ENCODE measurements at regions of chr19 and their contacts with region 1.

Region 1: GRCh38 chr19:47210689-47211316 is 20.2 kb downstream of the BBC3 start:
- DNase-seq: peak; percentile 74
- H3K4me3 ChIP-seq: no peak overlapping the region
- H3K27ac ChIP-seq: peak overlapping the region; percentile 29 to 76; a peak in 3 of 4 replicates
- H3K4me1 ChIP-seq: peaks cover 3 to 8% of the 10 kb centered on the region in 2 experiments; a peak in 1 of 4 replicates
- H3K27me3 ChIP-seq: no peaks in the 10 kb centered on the region
- CTCF ChIP-seq: peak; percentile 85
- EP300 ChIP-seq: no peak
- RAD21 ChIP-seq: peak; percentile 83

Region 2: GRCh38 chr19:46886546-46887239 is 324.1 kb before region 1 on chr19:
- CTCF ChIA-PET with region 1: no interaction called
- POLR2A ChIA-PET with region 1: no interaction called
- DNase-seq: no peak
- H3K4me3 ChIP-seq: no peak overlapping the region
- H3K27ac ChIP-seq: peak overlapping the region in 1 of 2 experiments; percentile 63; a peak in 2 of 4 replicates
- H3K4me1 ChIP-seq: peaks cover 4 to 14% of the 10 kb centered on the region in 2 experiments; a peak in 3 of 4 replicates
- H3K27me3 ChIP-seq: no peaks in the 10 kb centered on the region
- CTCF ChIP-seq: no peak
- EP300 ChIP-seq: no peak
- RAD21 ChIP-seq: no peak

Region 3: DNA sequence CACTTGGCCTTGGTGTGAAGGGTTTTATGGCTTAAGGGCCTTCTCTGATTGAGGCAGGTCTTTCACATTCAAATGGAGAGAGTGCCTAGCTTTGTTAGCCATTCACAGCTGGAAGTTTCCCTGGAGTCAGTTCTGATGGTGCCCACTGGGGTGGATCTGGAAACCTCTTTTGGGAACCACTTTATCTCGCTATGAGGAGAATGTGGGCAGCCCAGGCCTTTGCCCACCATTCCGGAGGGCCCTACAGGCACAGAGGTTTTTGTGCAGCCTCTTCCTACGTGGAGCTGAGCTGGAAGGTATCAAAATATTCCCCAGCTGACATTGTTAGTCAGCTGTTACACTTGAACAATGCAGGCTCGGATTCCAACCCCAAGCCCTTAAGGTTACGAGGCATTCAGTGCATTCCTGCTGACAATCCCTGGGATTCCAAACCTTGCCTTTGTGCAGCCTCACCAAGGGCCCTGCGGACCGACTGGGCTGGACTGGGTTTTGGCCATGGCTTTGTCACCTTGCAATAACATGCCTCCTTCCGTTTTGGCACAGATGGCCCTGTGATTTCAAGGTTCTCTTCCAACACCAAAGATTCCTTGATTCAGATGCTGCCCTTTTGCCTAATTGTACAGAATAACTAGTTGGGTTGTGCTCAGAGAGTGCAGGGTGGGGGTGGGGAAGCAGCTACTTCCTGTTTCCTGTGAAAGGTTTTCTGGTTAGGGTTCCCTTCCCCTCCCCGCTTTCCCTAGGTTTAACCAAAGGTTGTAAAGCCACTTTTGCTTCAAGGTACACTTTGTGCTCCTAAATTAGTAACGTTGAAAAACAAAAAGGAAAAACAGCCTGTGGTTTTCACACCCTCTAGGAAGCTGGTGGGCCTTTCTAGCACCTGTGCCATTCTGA is 53.1 kb before region 1 on chr19:
- CTCF ChIA-PET with region 1: interaction called, 14 read pairs
- POLR2A ChIA-PET with region 1: no interaction called
- DNase-seq: no peak
- H3K4me3 ChIP-seq: no peak overlapping the region
- H3K27ac ChIP-seq: peak overlapping the region; percentile 51 to 52; a peak in 3 of 4 replicates
- H3K4me1 ChIP-seq: peaks cover 11 to 19% of the 10 kb centered on the region in 2 experiments
- H3K27me3 ChIP-seq: no peaks in the 10 kb centered on the region
- CTCF ChIP-seq: no peak
- EP300 ChIP-seq: no peak
- RAD21 ChIP-seq: no peak

Region 4: DNA sequence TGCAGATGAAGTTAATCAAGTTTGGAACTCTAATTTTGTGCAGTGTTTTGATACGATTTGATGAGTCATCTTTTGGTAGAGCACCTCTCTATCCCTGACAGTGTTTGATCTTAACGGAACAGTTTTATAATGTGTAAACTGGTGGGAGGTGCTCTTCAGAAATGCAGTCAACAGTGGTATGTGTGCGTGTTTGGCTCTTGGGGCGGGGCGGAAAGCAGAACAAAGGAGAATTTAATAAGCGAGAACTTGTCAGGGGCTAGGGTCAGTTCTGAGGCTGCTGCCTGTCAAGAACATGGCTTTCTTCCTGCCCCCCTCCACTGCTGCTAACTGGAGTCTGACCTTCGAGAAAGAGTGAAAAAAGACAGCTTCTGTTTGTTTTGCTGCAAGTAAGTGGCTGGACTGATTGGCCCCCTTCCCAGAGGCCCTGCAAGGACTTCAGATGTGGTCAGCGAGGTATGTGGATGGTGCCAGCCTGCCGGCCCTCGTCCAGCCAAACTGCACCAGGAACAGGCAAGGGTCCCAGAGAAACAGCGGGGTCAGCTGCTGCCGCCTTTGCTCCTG is 20.6 kb before region 1 on chr19:
- CTCF ChIA-PET with region 1: interaction called, 41 read pairs
- POLR2A ChIA-PET with region 1: no interaction called
- DNase-seq: peak; percentile 46
- H3K4me3 ChIP-seq: peak overlapping the region in 1 of 2 experiments; percentile 16; a peak in 1 of 4 replicates
- H3K27ac ChIP-seq: peak overlapping the region; percentile 60 to 73
- H3K4me1 ChIP-seq: peaks cover 17 to 47% of the 10 kb centered on the region in 2 experiments; a peak in 3 of 4 replicates
- H3K27me3 ChIP-seq: no peaks in the 10 kb centered on the region
- CTCF ChIP-seq: no peak
- EP300 ChIP-seq: peak in 1 of 2 experiments; percentile 63; a peak in 1 of 4 replicates
- RAD21 ChIP-seq: no peak

Region 5: DNA sequence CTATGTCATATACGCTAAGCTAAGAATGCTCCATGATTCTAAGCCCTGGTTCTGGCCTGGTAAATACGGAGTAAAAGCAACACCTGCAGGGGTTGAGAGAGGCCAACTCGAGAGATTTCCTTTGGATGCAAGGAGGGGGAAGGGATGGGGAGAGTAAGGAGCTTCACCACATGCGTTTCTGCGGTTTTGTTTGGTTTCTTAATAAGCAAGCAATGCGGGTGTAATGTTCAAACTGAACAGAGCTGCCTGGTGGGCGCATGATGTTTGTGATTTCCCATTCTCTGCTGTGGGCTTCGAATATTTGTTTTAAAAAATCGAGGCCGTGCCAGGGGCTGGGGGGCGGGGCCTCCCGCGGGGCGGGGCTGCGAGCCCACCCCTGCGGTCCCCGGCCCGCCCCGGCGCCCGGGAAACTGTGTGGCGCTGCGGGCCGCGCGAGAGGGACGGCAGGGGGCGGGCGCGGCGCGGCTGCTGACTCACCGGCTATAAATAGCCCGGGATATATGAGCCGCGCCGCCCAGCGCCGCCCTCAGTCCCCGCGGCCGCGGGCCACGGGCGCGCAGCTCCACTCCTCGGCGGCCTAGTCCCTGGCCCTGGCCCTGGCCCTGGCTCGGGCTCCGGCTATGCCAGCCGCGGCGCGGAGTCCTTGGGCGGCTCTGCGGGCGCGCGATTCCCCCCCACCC is 15.1 kb after region 1 on chr19:
- CTCF ChIA-PET with region 1: interaction called, 69 read pairs
- POLR2A ChIA-PET with region 1: interaction called, 5 read pairs
- DNase-seq: peak; percentile 99
- H3K4me3 ChIP-seq: peak overlapping the region; percentile 49 to 93; a peak in 3 of 4 replicates
- H3K27ac ChIP-seq: peak overlapping the region; percentile 90 to 92
- H3K4me1 ChIP-seq: peaks cover 20 to 26% of the 10 kb centered on the region in 2 experiments; a peak in 3 of 4 replicates
- H3K27me3 ChIP-seq: no peaks in the 10 kb centered on the region
- CTCF ChIP-seq: peak; percentile 14; the same call in 1 of the 2 replicates
- EP300 ChIP-seq: peak in 1 of 2 experiments; percentile 35; a peak in 1 of 4 replicates
- RAD21 ChIP-seq: no peak

Region 6: GRCh38 chr19:47305309-47305751 is 94.5 kb after region 1 on chr19:
- CTCF ChIA-PET with region 1: no interaction called
- POLR2A ChIA-PET with region 1: no interaction called
- DNase-seq: peak; percentile 81
- H3K4me3 ChIP-seq: peak overlapping the region in 1 of 2 experiments; percentile 42; a peak in 1 of 4 replicates
- H3K27ac ChIP-seq: no peak overlapping the region
- H3K4me1 ChIP-seq: no peaks in the 10 kb centered on the region; a peak in 1 of 4 replicates
- H3K27me3 ChIP-seq: peaks cover 12% of the 10 kb centered on the region
- CTCF ChIP-seq: peak; percentile 99
- EP300 ChIP-seq: no peak
- RAD21 ChIP-seq: peak; percentile 54

Measured in SK-N-SH (cell line).